K562 (cell line): ENCODE measurements at regions of chr15 and their contacts with region 1.

Region 1: DNA sequence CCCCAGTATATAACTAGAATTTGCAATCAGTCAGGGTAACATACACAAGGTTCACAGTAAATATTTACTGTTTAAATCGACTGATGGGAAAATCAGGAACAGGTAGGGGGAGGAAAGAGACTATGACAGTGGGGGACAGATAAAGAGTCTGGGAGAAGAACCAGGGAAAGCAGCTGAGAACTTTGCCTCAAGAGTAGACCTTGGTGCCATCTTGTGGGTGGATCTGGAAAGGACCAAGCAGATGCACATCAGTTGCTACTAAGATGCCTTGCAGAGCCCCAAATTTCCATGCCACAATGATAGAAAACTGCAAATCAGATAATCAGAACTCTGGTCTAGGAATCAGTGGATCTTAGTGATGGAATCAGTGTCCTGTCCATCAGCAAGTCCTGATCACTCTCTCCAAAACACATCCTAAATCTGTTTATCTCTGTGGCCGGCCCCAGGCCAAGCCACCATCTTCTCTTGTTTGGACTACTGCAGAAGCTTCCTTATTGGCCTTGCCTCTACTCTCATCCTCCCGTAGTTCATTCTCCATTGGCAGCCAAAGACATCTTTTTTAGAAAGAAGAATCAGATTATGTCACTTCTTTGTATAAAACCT is 62.7 kb downstream of the PDE8A start:
- DNase-seq: peak in 2 of 4 experiments; percentile 46 to 72
- ATAC-seq: peak; percentile 80
- H3K4me3 ChIP-seq: no peak overlapping the region
- H3K27ac ChIP-seq: no peak overlapping the region
- H3K4me1 ChIP-seq: peaks cover 0 to 26% of the 10 kb centered on the region in 2 experiments; a peak in 3 of 5 replicates
- H3K27me3 ChIP-seq: no peaks in the 10 kb centered on the region
- CTCF ChIP-seq: peak; percentile 58 to 78 (median 68)
- EP300 ChIP-seq: 0 out of 2 replicates have a peak, but pooled peaks have one; percentile 9
- POLR2A ChIP-seq: no peak
- RAD21 ChIP-seq: peak; percentile 75 to 85

Region 2: DNA sequence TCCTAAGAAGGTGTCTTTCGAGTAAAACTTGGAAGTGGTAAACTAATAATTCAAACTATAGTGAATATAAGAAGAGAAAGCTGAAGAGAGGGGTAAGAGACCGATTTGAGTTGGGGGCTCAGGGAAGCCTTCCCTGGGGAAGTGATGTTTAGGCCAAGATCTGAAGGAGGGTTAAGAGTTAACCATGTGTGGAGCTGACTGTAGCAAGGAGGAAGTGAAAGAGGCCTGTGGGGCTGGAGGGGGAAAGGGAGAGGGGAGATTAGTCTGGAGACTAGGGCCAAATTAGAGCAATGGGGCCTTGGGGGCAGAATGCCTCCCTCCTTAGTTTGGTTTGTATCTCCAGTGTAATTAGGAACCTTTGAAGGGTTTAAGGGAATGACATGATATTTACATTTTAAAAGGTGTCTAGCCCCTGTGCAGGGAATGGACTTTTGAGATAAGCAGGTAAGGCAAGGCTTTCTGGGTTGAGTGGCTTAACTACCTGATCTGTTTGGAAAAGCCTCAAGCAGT is 293.7 kb before region 1 on chr15:
- CTCF ChIA-PET with region 1: no interaction called
- POLR2A ChIA-PET with region 1: no interaction called
- in situ Hi-C with region 1: no loop called
- intact Hi-C with region 1: no loop called
- DNase-seq: peak in 2 of 4 experiments; percentile 35 to 74
- ATAC-seq: peak; percentile 33
- H3K4me3 ChIP-seq: peak overlapping the region; percentile 91; the same call in 1 of the 2 replicates
- H3K27ac ChIP-seq: peak overlapping the region; percentile 90
- H3K4me1 ChIP-seq: peaks cover 22 to 29% of the 10 kb centered on the region in 2 experiments; a peak in 4 of 5 replicates
- H3K27me3 ChIP-seq: no peaks in the 10 kb centered on the region
- CTCF ChIP-seq: no peak
- EP300 ChIP-seq: no peak
- POLR2A ChIP-seq: no peak
- RAD21 ChIP-seq: no peak

Region 3: GRCh38 chr15:84826369-84826823 is 218.0 kb before region 1 on chr15:
- CTCF ChIA-PET with region 1: interaction called, 3 read pairs
- POLR2A ChIA-PET with region 1: no interaction called
- in situ Hi-C with region 1: no loop called
- intact Hi-C with region 1: loop called (anchors 1 kb)
- DNase-seq: peak; percentile 66 to 75 (median 71)
- ATAC-seq: peak; percentile 91
- H3K4me3 ChIP-seq: no peak overlapping the region
- H3K27ac ChIP-seq: no peak overlapping the region
- H3K4me1 ChIP-seq: peaks cover 11 to 26% of the 10 kb centered on the region in 2 experiments; a peak in 3 of 5 replicates
- H3K27me3 ChIP-seq: no peaks in the 10 kb centered on the region
- CTCF ChIP-seq: peak; percentile 88 to 89 (median 88)
- EP300 ChIP-seq: peak; percentile 6; the same call in 1 of the 2 replicates
- POLR2A ChIP-seq: no peak
- RAD21 ChIP-seq: peak; percentile 74 to 94

Region 4: GRCh38 chr15:84883916-84884768 is 160.2 kb before region 1 on chr15 and contains the start of gene SLC28A1:
- CTCF ChIA-PET with region 1: no interaction called
- POLR2A ChIA-PET with region 1: no interaction called
- in situ Hi-C with region 1: no loop called
- intact Hi-C with region 1: loop called (anchors 10 kb)
- DNase-seq: no peak
- ATAC-seq: peak; percentile 34
- H3K4me3 ChIP-seq: no peak within 1 kb of the TSS
- H3K27ac ChIP-seq: no peak within 1 kb of the TSS
- H3K4me1 ChIP-seq: peaks cover 3 to 10% of the 10 kb centered on the region in 2 experiments; a peak in 2 of 5 replicates
- H3K27me3 ChIP-seq: peaks cover 0 to 18% of the 10 kb centered on the region in 2 experiments; a peak in 3 of 5 replicates
- CTCF ChIP-seq: no peak
- EP300 ChIP-seq: no peak
- POLR2A ChIP-seq: no peak
- RAD21 ChIP-seq: no peak
- polyA plus RNA-seq, gene SLC28A1: 0.04 TPM in 1 of 2 experiments, not detected in the other

Region 5: DNA sequence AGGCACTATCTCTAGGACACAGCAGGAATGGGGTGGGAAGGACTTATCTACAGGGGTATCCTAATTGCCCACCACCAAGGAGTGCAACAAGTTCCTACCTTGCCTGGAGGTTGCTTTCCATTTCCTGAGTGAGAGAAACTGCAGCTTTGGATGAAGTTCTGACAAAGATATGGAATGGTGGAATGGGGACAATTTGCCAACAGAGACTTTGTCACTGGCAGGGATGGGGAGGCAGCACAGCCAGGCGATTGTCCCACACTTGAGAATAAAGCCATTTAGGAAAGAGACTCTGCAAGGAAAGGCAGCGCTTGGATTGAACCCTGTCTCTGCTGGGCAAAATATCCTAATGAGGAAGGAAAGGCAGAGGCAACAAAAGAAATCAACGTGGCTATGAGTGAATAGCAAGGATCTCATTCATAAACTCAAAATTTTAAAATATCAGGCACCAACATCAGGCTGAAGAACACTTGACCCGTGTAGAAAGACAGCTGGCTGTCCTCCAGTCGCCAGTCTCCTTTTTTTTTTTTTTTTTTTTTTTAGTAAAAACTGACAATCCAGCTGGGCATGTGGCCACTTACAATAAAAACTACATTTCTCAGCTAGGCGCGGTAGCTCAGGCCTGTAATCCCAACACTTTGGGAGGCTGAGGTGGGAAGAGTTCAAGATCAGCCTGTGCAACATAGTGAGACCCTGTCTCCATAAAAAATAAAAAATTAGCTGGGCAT is 94.3 kb before region 1 on chr15:
- CTCF ChIA-PET with region 1: interaction called, 4 read pairs
- POLR2A ChIA-PET with region 1: interaction called, 4 read pairs
- in situ Hi-C with region 1: loop called (anchors 5 kb)
- intact Hi-C with region 1: loop called (anchors 1 kb)
- DNase-seq: peak in 3 of 4 experiments; percentile 30 to 36 (median 34)
- ATAC-seq: no peak; the same call in 2 of the 3 replicates
- H3K4me3 ChIP-seq: no peak overlapping the region
- H3K27ac ChIP-seq: peak overlapping the region; percentile 93
- H3K4me1 ChIP-seq: peaks cover 41 to 66% of the 10 kb centered on the region in 2 experiments
- H3K27me3 ChIP-seq: no peaks in the 10 kb centered on the region
- CTCF ChIP-seq: no peak; a peak in 1 of 6 replicates
- EP300 ChIP-seq: no peak
- POLR2A ChIP-seq: no peak
- RAD21 ChIP-seq: no peak

Region 6: GRCh38 chr15:84955089-84955848 is 89.1 kb before region 1 on chr15:
- CTCF ChIA-PET with region 1: interaction called, 4 read pairs
- POLR2A ChIA-PET with region 1: interaction called, 4 read pairs
- in situ Hi-C with region 1: loop called (anchors 5 kb)
- intact Hi-C with region 1: loop called (anchors 1 kb)
- DNase-seq: peak; percentile 65 to 87 (median 72)
- ATAC-seq: peak; percentile 82
- H3K4me3 ChIP-seq: no peak overlapping the region
- H3K27ac ChIP-seq: peak overlapping the region; percentile 25; the same call in 1 of the 3 replicates
- H3K4me1 ChIP-seq: peaks cover 44 to 56% of the 10 kb centered on the region in 2 experiments
- H3K27me3 ChIP-seq: no peaks in the 10 kb centered on the region
- CTCF ChIP-seq: peak; percentile 85 to 92 (median 90)
- EP300 ChIP-seq: peak; percentile 39; the same call in 1 of the 2 replicates
- POLR2A ChIP-seq: no peak
- RAD21 ChIP-seq: peak; percentile 84 to 94

Region 7: GRCh38 chr15:84981054-84981710 is 63.2 kb before region 1 on chr15:
- CTCF ChIA-PET with region 1: no interaction called
- POLR2A ChIA-PET with region 1: no interaction called
- in situ Hi-C with region 1: no loop called
- intact Hi-C with region 1: loop called (anchors 2 kb)
- DNase-seq: peak; percentile 96 to 99 (median 97)
- ATAC-seq: peak; percentile 82
- H3K4me3 ChIP-seq: peak overlapping the region; percentile 71
- H3K27ac ChIP-seq: peak overlapping the region; percentile 93
- H3K4me1 ChIP-seq: peaks cover 28 to 31% of the 10 kb centered on the region in 2 experiments
- H3K27me3 ChIP-seq: no peaks in the 10 kb centered on the region
- CTCF ChIP-seq: peak; percentile 43 to 66 (median 49); a peak in 4 of 6 replicates
- EP300 ChIP-seq: peak; percentile 42; the same call in 1 of the 2 replicates
- POLR2A ChIP-seq: peak; percentile 64
- RAD21 ChIP-seq: peak; percentile 4 to 20; a peak in 2 of 4 replicates

Region 8: DNA sequence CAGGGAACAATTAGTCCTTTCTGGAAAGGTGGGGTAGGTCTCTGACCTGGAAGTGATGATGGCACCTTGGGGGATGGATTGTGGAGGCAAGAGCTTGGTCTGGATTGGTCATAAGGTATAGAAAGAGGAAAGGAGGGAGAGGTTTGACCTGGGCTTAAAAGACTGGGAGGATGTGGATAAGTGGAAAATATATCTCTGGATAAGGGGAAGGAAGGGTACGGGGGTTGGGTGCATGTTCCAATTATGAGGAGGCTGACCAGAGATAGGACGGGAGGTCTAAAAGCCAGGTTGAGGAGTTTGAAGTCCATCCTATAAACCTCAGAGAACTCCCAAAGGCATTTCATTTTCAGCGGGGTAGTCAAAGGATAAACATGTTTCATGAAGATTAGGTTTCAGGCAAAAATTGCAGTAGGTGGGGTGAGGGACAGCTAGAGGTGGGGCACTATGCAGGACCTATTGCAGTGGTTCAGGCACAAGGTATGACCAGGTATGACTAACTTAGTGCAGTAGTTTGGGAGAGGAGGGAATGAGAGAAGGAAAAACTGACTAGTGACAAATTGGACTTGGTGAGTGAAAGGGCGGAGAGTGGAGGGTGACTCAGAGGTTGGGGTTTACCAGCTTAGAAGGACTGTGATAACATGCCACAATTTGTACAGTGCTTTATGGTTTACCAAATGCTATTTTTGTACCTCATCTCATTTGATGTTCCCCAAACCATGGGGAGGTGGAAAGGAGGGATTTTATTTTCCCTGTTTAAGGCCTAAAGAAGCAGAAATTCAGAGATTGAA is 52.0 kb before region 1 on chr15:
- CTCF ChIA-PET with region 1: no interaction called
- POLR2A ChIA-PET with region 1: no interaction called
- in situ Hi-C with region 1: no loop called
- intact Hi-C with region 1: no loop called
- DNase-seq: peak in 2 of 4 experiments; percentile 42 to 53
- ATAC-seq: peak; percentile 80
- H3K4me3 ChIP-seq: no peak overlapping the region
- H3K27ac ChIP-seq: no peak overlapping the region
- H3K4me1 ChIP-seq: peaks cover 0 to 10% of the 10 kb centered on the region in 2 experiments; a peak in 3 of 5 replicates
- H3K27me3 ChIP-seq: no peaks in the 10 kb centered on the region
- CTCF ChIP-seq: no peak
- EP300 ChIP-seq: no peak
- POLR2A ChIP-seq: no peak
- RAD21 ChIP-seq: no peak

Region 9: DNA sequence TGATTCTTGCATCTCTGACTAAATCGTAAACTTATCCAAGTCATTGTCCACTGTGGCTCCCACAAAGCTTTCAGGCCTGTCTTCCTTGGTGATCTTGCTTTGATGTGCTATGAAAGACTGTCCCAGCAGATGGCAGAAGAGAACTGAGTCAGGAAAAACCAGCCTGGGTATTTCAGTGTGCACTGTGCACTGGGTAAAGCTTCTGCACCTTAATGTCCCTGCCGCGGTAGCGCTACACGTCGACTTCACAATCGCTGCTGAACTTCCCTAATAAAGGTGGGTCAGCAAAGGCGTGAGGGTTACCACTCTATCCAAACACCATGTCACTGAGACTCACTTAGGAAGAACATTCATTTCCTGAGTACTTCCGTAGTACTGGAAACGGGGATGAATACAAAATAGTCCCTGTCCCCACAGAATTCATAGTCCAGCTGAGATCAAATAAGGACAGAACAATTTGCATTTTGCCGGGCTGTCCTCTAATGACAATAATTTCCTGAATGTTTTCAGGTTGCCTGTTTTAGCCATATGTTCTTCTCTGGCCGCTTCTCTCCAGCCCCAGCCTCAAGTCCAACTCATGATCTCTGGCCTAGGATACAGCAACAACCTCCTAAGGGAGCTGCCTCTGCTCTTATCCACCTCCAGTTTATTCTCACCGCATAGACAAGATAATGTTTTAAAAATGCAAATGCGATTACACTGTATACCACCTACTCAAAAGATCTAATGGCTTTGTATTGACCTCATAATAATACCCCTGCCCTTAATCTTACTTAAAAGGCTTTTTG is 252.5 kb after region 1 on chr15:
- CTCF ChIA-PET with region 1: no interaction called
- POLR2A ChIA-PET with region 1: no interaction called
- in situ Hi-C with region 1: no loop called
- intact Hi-C with region 1: no loop called
- DNase-seq: peak in 3 of 4 experiments; percentile 17 to 57 (median 46)
- ATAC-seq: peak; percentile 96
- H3K4me3 ChIP-seq: no peak overlapping the region
- H3K27ac ChIP-seq: no peak overlapping the region
- H3K4me1 ChIP-seq: no peaks in the 10 kb centered on the region
- H3K27me3 ChIP-seq: peaks cover 2 to 10% of the 10 kb centered on the region in 2 experiments; a peak in 3 of 5 replicates
- CTCF ChIP-seq: peak; percentile 62 to 66 (median 62)
- EP300 ChIP-seq: no peak
- POLR2A ChIP-seq: no peak
- RAD21 ChIP-seq: peak; percentile 33 to 64

Region 10: GRCh38 chr15:85412956-85413854 is 368.9 kb after region 1 on chr15:
- CTCF ChIA-PET with region 1: no interaction called
- POLR2A ChIA-PET with region 1: no interaction called
- in situ Hi-C with region 1: no loop called
- intact Hi-C with region 1: no loop called
- DNase-seq: no peak
- ATAC-seq: no peak
- H3K4me3 ChIP-seq: no peak overlapping the region
- H3K27ac ChIP-seq: no peak overlapping the region
- H3K4me1 ChIP-seq: no peaks in the 10 kb centered on the region
- H3K27me3 ChIP-seq: peaks cover 6 to 9% of the 10 kb centered on the region in 2 experiments; a peak in 4 of 5 replicates
- CTCF ChIP-seq: no peak
- EP300 ChIP-seq: no peak
- POLR2A ChIP-seq: no peak
- RAD21 ChIP-seq: no peak